Mucosa of descending colon (tissue), 3 donors: ENCODE measurements at regions of chr2 and their contacts with region 1.

Region 1: DNA sequence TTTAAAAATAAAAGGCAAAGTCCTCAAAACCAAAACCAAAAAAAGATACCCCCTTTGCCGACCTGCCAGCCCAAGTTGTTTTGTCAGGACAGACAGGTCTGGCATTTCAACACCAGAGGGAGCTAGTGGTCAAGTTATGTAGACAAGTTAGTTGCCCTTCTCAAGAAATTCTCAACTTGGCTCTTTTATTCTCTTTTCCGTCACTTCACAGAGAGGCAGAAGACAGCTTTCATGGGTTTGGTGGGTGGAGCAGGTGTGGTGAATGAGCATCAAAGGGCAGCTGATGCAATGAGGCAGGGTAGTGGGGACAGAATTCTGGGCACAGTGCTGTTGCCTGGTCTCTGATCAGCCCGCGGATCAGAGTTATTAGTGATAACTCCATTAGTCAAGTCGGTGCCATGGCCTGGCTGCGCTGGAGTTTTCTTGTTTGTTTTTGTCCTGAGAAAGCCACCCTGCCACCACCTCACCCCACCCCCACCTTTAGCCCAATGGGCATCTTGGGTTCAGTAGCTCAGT is 303.7 kb upstream of the EPAS1 start:
- DNase-seq: peak in 1 of 3 donors; percentile 91
- ATAC-seq: peak; percentile 56
- H3K4me3 ChIP-seq: no peak overlapping the region
- H3K4me1 ChIP-seq: peaks cover 12% of the 10 kb centered on the region
- CTCF ChIP-seq: peak; percentile 37

Region 2: GRCh38 chr2:46461011-46461674 is 467.6 kb after region 1 on chr2:
- intact Hi-C with region 1: loop called in 1 of 2 experiments (anchors 2 kb)
- DNase-seq: peak; percentile 70 to 90 (median 87)
- ATAC-seq: peak; percentile 83
- H3K4me3 ChIP-seq: no peak overlapping the region
- H3K4me1 ChIP-seq: peaks cover 4% of the 10 kb centered on the region
- CTCF ChIP-seq: peak; percentile 98